Caco-2 (cell line): ENCODE measurements at regions of chr6 and their contacts with region 1.

Region 1: DNA sequence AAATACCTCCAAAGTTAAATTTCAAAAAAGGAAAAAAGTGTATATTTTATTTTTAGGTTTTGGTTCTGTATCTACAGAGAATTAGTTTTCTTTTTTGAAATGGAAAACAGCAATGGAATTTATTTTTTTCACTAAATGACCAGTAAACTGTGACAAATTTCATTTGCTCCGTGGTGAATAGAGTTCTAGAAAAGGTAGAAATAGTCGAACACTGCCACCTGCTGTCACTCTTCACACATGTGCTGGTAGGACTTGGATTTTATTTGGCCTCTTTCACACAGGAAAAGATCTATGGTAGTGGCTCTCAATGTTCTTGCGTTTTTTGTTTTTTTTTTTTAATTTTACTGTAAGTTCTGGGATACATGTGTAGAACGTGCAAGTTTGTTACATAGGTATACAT is 312.5 kb downstream of the EYA4 start:
- DNase-seq: peak in 1 of 2 experiments; percentile 47
- H3K4me3 ChIP-seq: no peak overlapping the region
- H3K4me3 Mint-ChIP-seq: no peak overlapping the region
- H3K27ac Mint-ChIP-seq: no peak overlapping the region
- H3K4me1 ChIP-seq: peaks cover 7% of the 10 kb centered on the region; the same call in 1 of the 2 replicates
- H3K4me1 Mint-ChIP-seq: peaks cover 8% of the 10 kb centered on the region
- H3K27me3 ChIP-seq: no peaks in the 10 kb centered on the region
- H3K27me3 Mint-ChIP-seq: no peaks in the 10 kb centered on the region
- CTCF ChIP-seq: peak; percentile 59 to 65

Region 2: GRCh38 chr6:132830334-132830751 is 723.3 kb before region 1 on chr6:
- CTCF ChIA-PET with region 1: no interaction called
- POLR2A ChIA-PET with region 1: no interaction called
- intact Hi-C with region 1: loop called (anchors 1 kb)
- DNase-seq: peak in 1 of 2 experiments; percentile 39
- H3K4me3 ChIP-seq: no peak overlapping the region
- H3K4me3 Mint-ChIP-seq: no peak overlapping the region
- H3K27ac Mint-ChIP-seq: no peak overlapping the region
- H3K4me1 ChIP-seq: no peaks in the 10 kb centered on the region
- H3K4me1 Mint-ChIP-seq: no peaks in the 10 kb centered on the region
- H3K27me3 ChIP-seq: no peaks in the 10 kb centered on the region
- H3K27me3 Mint-ChIP-seq: peaks cover 1% of the 10 kb centered on the region
- CTCF ChIP-seq: peak; percentile 32 to 55

Region 3: GRCh38 chr6:132995432-132995831 is 558.2 kb before region 1 on chr6:
- CTCF ChIA-PET with region 1: no interaction called
- POLR2A ChIA-PET with region 1: no interaction called
- intact Hi-C with region 1: no loop called
- DNase-seq: no peak
- H3K4me3 ChIP-seq: no peak overlapping the region
- H3K4me3 Mint-ChIP-seq: no peak overlapping the region
- H3K27ac Mint-ChIP-seq: no peak overlapping the region
- H3K4me1 ChIP-seq: no peaks in the 10 kb centered on the region
- H3K4me1 Mint-ChIP-seq: no peaks in the 10 kb centered on the region
- H3K27me3 ChIP-seq: no peaks in the 10 kb centered on the region
- H3K27me3 Mint-ChIP-seq: no peaks in the 10 kb centered on the region
- CTCF ChIP-seq: no peak

Region 4: DNA sequence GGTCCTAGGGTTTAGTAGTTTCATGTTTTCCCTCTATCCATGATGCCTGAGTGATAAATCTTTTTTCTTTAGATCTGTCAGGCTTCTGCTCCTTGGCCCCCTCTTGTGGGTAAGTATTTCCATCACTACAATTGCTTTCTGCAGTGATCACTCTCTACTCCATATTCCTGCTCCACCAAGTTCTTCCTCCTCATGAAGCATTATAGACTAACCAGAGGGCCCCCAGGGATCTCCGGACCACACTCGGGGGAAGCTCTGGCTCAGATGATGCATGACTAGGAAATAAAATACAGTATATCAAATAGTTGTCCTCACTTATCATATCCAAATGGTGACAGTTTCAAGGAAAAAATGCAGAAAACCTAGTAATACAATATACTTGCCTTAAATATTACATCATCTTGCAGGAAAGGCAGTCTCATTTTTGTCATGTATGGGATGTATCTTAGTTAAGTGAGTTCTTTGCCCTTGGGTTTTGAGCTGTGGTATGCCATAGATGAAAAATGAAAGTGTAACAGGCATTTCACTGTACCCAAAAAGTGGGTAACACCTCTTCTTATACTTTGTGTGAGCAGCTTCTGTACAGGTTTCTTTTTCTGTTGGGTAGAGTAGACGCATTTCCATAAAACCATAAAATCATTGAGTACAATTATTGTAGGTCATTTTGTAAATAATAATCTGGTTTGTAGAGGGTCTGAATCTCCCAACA is 513.4 kb before region 1 on chr6:
- CTCF ChIA-PET with region 1: no interaction called
- POLR2A ChIA-PET with region 1: no interaction called
- intact Hi-C with region 1: loop called (anchors 1 kb)
- DNase-seq: peak in 1 of 2 experiments; percentile 38
- H3K4me3 ChIP-seq: no peak overlapping the region
- H3K4me3 Mint-ChIP-seq: no peak overlapping the region
- H3K27ac Mint-ChIP-seq: no peak overlapping the region
- H3K4me1 ChIP-seq: no peaks in the 10 kb centered on the region
- H3K4me1 Mint-ChIP-seq: no peaks in the 10 kb centered on the region
- H3K27me3 ChIP-seq: no peaks in the 10 kb centered on the region
- H3K27me3 Mint-ChIP-seq: no peaks in the 10 kb centered on the region
- CTCF ChIP-seq: peak; percentile 27 to 55

Region 5: GRCh38 chr6:133286765-133287164 is 266.9 kb before region 1 on chr6:
- CTCF ChIA-PET with region 1: no interaction called
- POLR2A ChIA-PET with region 1: no interaction called
- intact Hi-C with region 1: loop called (anchors 1 kb)
- DNase-seq: peak in 1 of 2 experiments; percentile 16
- H3K4me3 ChIP-seq: no peak overlapping the region
- H3K4me3 Mint-ChIP-seq: no peak overlapping the region
- H3K27ac Mint-ChIP-seq: no peak overlapping the region
- H3K4me1 ChIP-seq: no peaks in the 10 kb centered on the region
- H3K4me1 Mint-ChIP-seq: no peaks in the 10 kb centered on the region
- H3K27me3 ChIP-seq: no peaks in the 10 kb centered on the region
- H3K27me3 Mint-ChIP-seq: peaks cover 5% of the 10 kb centered on the region
- CTCF ChIP-seq: peak; percentile 24 to 38

Region 6: GRCh38 chr6:133539502-133540259 is 14.0 kb before region 1 on chr6:
- CTCF ChIA-PET with region 1: no interaction called
- POLR2A ChIA-PET with region 1: no interaction called
- intact Hi-C with region 1: no loop called
- DNase-seq: no peak
- H3K4me3 ChIP-seq: no peak overlapping the region
- H3K4me3 Mint-ChIP-seq: no peak overlapping the region
- H3K27ac Mint-ChIP-seq: no peak overlapping the region
- H3K4me1 ChIP-seq: no peaks in the 10 kb centered on the region
- H3K4me1 Mint-ChIP-seq: no peaks in the 10 kb centered on the region
- H3K27me3 ChIP-seq: no peaks in the 10 kb centered on the region
- H3K27me3 Mint-ChIP-seq: peaks cover 7% of the 10 kb centered on the region
- CTCF ChIP-seq: no peak